HEK293 (cell line): ENCODE measurements at regions of chr14 and their contacts with region 1.

Region 1: DNA sequence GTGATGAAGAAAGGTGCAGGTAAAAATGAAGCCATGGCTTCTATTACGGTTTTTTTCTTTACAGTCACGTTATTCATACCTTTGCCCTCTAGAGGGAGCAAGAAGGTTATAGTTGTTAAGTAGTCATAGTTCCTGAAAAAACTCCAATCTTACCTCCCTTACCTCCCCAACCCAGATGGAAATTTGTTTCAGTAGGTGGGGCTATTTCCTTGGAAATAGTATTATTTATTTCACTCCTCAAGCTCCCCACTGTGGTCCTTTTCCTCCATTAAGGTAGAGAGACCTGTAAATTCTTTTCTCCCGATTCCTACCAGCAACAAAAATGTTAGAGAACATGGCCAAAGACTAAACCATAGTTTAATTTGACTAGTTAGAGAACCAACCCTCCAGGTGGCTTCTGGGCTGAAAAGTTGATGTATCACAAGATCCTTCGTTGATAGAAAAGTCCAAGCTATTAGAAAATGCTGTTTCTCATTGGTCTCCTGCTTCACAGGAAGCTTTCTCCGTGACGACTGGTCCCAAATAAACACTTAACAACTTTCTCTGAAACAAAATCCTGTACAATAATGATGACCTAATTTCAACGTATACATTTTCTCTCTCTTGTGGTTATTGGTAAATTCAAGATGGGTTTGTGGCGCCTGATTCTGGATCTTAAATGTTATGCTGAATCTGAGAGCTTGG is 43.5 kb downstream of the TMX1 start:
- H3K4me3 ChIP-seq: no peak overlapping the region
- H3K27ac ChIP-seq: no peak overlapping the region
- H3K4me1 ChIP-seq: no peaks in the 10 kb centered on the region; the same call in 1 of the 2 replicates
- CTCF ChIP-seq: peak; percentile 69

Region 2: DNA sequence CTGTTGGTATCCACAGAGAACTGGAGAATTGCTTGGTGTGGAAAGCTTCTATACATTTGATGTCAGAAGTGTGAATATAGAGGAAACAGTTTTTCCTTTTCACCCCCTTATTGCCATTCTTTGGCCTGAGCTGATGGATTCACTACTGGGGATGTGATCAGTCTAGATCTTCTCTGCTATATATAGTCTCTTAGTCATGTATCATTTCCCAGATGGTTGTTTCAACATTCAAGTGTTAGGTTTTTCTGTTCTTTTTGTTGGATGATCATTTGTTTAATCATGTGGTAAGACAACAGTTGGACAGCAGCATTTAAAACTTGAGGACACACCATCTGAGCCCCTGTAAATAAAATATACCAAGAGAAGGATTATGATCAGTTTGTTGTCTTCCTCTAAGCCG is 13.9 kb before region 1 on chr14:
- CTCF ChIA-PET with region 1: interaction called, 10 read pairs
- POLR2A ChIA-PET with region 1: no interaction called
- H3K4me3 ChIP-seq: no peak overlapping the region
- H3K27ac ChIP-seq: no peak overlapping the region
- H3K4me1 ChIP-seq: no peaks in the 10 kb centered on the region
- CTCF ChIP-seq: no peak

Region 3: DNA sequence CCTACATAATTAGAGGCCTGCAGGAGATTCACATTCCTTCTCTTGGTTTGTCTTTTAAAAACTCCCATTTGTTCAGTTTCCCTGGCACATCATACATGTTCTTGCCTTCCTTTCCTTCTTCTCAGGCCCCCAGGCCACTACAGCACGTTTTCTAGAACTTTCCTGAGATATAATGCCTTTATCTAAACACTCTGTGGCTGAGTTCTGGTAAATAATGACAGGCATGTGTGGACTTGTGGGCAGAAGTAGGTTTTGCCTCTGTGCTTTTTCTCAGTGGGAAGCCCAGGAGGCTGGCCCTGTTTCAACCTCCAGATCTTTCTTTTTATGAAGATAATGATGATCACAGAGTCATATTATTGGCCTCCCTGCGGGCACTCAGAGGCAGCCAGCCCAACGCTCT is 73.7 kb after region 1 on chr14:
- CTCF ChIA-PET with region 1: interaction called, 11 read pairs
- POLR2A ChIA-PET with region 1: no interaction called
- H3K4me3 ChIP-seq: no peak overlapping the region
- H3K27ac ChIP-seq: no peak overlapping the region
- H3K4me1 ChIP-seq: no peaks in the 10 kb centered on the region
- CTCF ChIP-seq: no peak

Region 4: DNA sequence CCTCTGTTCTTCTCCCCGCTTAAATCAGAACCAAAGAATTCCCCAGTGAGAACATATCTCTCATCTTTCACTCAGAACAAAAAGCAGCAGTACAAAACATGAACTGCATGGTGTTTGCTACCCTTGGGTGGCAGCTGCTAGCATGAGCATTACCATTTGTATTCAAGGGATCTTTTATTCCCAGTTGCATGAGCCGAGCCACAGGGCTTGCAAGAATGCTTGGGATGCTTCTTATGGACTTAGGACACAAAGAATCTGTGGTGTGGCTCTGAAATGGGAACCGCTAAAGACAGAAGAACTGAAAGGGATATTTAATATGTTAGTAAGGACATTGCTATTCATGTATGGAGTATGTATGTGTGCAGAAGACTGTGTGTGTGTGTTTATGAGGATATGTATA is 147.1 kb after region 1 on chr14:
- CTCF ChIA-PET with region 1: no interaction called
- POLR2A ChIA-PET with region 1: no interaction called
- H3K4me3 ChIP-seq: no peak overlapping the region
- H3K27ac ChIP-seq: no peak overlapping the region
- H3K4me1 ChIP-seq: no peaks in the 10 kb centered on the region
- CTCF ChIP-seq: no peak

Region 5: GRCh38 chr14:51651388-51652167 is 368.0 kb after region 1 on chr14 and contains the start of gene FRMD6:
- CTCF ChIA-PET with region 1: interaction called, 14 read pairs
- POLR2A ChIA-PET with region 1: interaction called, 3 read pairs
- H3K4me3 ChIP-seq: peak within 1 kb of the TSS; percentile 95
- H3K27ac ChIP-seq: peak within 1 kb of the TSS; percentile 98
- H3K4me1 ChIP-seq: peaks cover 27% of the 10 kb centered on the region
- CTCF ChIP-seq: peak; percentile 72

Region 6: GRCh38 chr14:51780006-51780692 is 496.6 kb after region 1 on chr14:
- CTCF ChIA-PET with region 1: interaction called, 228 read pairs
- POLR2A ChIA-PET with region 1: interaction called, 3 read pairs
- H3K4me3 ChIP-seq: peak overlapping the region; percentile 9; the same call in 1 of the 2 replicates
- H3K27ac ChIP-seq: no peak overlapping the region
- H3K4me1 ChIP-seq: no peaks in the 10 kb centered on the region
- CTCF ChIP-seq: peak; percentile 13; the same call in 1 of the 2 replicates

Region 7: GRCh38 chr14:51979088-51979709 is 695.7 kb after region 1 on chr14:
- CTCF ChIA-PET with region 1: interaction called, 11 read pairs
- POLR2A ChIA-PET with region 1: no interaction called
- H3K4me3 ChIP-seq: no peak overlapping the region
- H3K27ac ChIP-seq: no peak overlapping the region
- H3K4me1 ChIP-seq: no peaks in the 10 kb centered on the region
- CTCF ChIP-seq: peak; percentile 29; the same call in 1 of the 2 replicates